SK-N-SH (cell line): ENCODE measurements at regions of chr18 and their contacts with region 1.

Region 1: GRCh38 chr18:51668101-51668500 is 470.6 kb upstream of the MEX3C start:
- DNase-seq: peak; percentile 65
- H3K4me3 ChIP-seq: peak overlapping the region in 1 of 2 experiments; percentile 19; a peak in 1 of 4 replicates
- H3K27ac ChIP-seq: no peak overlapping the region
- H3K4me1 ChIP-seq: peaks cover 0 to 17% of the 10 kb centered on the region in 2 experiments; a peak in 2 of 4 replicates
- H3K27me3 ChIP-seq: no peaks in the 10 kb centered on the region
- CTCF ChIP-seq: peak; percentile 86
- EP300 ChIP-seq: no peak
- RAD21 ChIP-seq: peak; percentile 90

Region 2: GRCh38 chr18:52288403-52289004 is 620.4 kb after region 1 on chr18:
- CTCF ChIA-PET with region 1: interaction called, 34 read pairs
- POLR2A ChIA-PET with region 1: no interaction called
- DNase-seq: peak; percentile 28
- H3K4me3 ChIP-seq: no peak overlapping the region; a peak in 1 of 4 replicates
- H3K27ac ChIP-seq: no peak overlapping the region
- H3K4me1 ChIP-seq: peaks cover 6 to 18% of the 10 kb centered on the region in 2 experiments; a peak in 3 of 4 replicates
- H3K27me3 ChIP-seq: no peaks in the 10 kb centered on the region
- CTCF ChIP-seq: peak; percentile 67
- EP300 ChIP-seq: no peak
- RAD21 ChIP-seq: peak; percentile 71

Region 3: DNA sequence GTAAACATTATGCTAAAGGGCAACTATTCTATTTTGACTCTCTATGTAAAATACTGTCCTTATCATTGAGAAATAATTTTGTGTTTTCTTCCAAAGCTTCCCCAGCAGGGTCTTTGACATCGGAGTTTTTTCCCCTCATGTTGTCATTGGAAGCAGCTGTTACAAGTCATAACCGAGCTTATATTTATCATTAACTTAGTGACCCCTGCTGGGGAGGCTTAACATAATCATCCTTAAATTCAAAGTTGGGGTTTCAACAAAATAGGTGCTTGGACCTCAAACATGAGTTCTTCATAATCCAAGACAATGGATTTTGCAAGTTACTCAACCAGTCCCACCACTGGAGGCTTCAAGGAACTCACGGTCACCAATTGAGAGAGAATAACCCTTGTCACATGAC is 1002.8 kb after region 1 on chr18:
- CTCF ChIA-PET with region 1: interaction called, 13 read pairs
- POLR2A ChIA-PET with region 1: no interaction called
- DNase-seq: peak; percentile 37
- H3K4me3 ChIP-seq: no peak overlapping the region
- H3K27ac ChIP-seq: no peak overlapping the region
- H3K4me1 ChIP-seq: peaks cover 0 to 6% of the 10 kb centered on the region in 2 experiments; a peak in 1 of 4 replicates
- H3K27me3 ChIP-seq: no peaks in the 10 kb centered on the region
- CTCF ChIP-seq: peak; percentile 55
- EP300 ChIP-seq: no peak
- RAD21 ChIP-seq: peak; percentile 72